Sigmoid colon (tissue), 7 donors: ENCODE measurements at regions of chr15 and their contacts with region 1.

Region 1: GRCh38 chr15:90994417-90995311 is at the start of gene PRC1:
- DNase-seq: peak; percentile 99
- H3K4me3 ChIP-seq: peak within 1 kb of the TSS; percentile 59 to 96 (median 80)
- H3K27ac ChIP-seq: peak within 1 kb of the TSS; percentile 82 to 92 (median 87)
- H3K4me1 ChIP-seq: peaks cover 0 to 11% (median 7%) of the 10 kb centered on the region in 4 donors
- H3K27me3 ChIP-seq: no peaks in the 10 kb centered on the region
- CTCF ChIP-seq: no peak
- EP300 ChIP-seq: no peak
- POLR2A ChIP-seq: peak in 1 of 2 donors; percentile 39
- total RNA-seq, gene PRC1: 1.8 to 13.8 (median 6.4) TPM

Region 2: DNA sequence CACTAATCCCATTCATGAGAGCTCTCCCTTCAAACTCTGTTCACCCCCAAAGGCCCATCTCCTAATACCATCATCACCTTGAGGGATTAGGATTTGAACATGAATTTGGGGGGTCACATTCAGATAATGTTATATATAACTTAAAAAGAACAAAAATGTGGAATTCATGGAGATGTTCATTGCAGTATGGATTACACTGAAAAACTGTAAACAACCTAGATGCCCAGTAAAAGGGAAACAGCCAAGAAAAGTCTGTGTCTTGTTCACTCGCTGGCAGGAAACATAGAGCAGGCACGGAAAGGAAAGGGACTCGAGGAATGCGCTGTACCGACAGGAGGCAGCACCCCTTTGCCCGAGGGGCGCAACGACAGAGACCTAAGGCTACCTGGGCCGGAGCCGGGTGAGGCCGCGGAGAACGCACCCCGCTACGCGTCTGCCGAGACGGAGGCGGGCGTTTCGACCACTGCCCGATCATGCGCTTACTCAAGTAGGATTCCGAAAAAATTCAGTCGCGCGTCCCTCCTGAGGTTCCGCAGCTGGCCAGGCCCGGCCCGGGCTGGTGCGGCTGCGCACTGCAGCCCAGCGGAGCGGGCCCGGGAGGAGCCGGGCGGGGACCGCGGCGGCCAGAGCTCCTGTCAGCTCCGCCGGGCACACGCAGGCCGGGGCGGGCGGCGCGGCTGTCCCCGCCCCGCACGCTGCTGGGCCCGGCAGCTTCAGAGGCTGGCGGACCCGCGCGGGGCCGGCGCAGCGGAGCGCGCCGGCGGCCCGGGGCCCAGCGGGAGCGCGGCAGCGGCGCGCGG is 92.4 kb before region 1 on chr15:
- intact Hi-C with region 1: loop called (anchors 2 kb)
- DNase-seq: peak; percentile 88
- H3K4me3 ChIP-seq: peak overlapping the region; percentile 48 to 81 (median 74)
- H3K27ac ChIP-seq: peak overlapping the region; percentile 93 to 98 (median 96)
- H3K4me1 ChIP-seq: peaks cover 0 to 25% (median 21%) of the 10 kb centered on the region in 4 donors
- H3K27me3 ChIP-seq: no peaks in the 10 kb centered on the region
- CTCF ChIP-seq: peak; percentile 47 to 84 (median 76)
- EP300 ChIP-seq: no peak
- POLR2A ChIP-seq: no peak

Region 3: DNA sequence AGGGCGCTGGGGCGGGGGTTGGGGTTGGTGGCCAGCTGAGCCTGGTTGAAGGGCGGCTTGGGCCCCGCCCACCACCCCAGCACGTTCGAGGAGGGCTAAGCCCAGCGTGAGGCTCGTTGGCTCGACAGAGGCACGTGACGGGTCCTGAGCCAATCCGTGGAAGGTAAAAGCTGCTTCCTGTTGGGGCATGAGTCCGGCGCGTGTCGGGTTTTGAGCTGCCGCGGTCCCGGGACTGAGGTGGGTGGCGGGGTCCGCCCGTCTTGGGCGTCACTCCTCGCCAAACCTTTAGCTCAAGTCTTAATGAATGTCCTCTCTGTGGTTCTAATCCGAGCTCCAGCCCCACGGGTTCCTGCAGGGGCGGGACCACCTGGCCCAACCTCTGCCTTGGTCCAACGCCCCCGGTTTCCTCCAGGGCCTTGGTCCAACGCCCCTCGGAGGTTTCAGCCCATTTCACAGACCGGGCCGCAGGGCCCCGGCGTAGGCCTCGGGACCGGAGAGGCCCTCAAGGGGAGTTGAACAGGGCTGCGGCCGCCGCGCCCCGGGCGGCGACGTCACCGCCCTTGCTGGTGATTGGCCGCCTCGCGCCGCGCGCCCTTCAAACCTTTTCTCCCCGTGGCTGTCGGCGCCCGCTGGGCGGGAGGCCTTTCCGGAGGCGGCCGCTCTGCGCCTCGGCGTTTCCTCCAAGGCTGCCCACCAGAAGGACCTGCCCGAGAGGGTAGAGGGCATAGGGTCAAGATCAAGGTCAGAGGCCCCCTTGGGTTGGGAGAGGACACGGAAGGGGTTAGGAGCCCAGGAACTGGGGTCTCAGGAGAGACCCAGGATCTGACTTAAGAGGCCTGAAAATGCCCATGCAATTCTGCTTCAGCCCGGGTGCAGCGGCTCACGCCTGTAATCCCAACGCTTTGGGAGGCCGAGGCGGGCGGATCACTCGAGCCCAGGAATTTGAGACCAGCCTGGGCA is 39.7 kb before region 1 on chr15 and contains the start of gene RCCD1:
- intact Hi-C with region 1: loop called (anchors 2 kb)
- DNase-seq: peak; percentile 99
- H3K4me3 ChIP-seq: peak within 1 kb of the TSS; percentile 81 to 93 (median 88)
- H3K27ac ChIP-seq: peak within 1 kb of the TSS; percentile 95 to 99 (median 96)
- H3K4me1 ChIP-seq: peaks cover 0 to 48% (median 41%) of the 10 kb centered on the region in 4 donors
- H3K27me3 ChIP-seq: no peaks in the 10 kb centered on the region
- CTCF ChIP-seq: no peak
- EP300 ChIP-seq: no peak
- POLR2A ChIP-seq: peak; percentile 17 to 36
- total RNA-seq, gene RCCD1: 5.2 to 8.0 (median 6.7) TPM

Region 4: GRCh38 chr15:91022075-91022835 is 27.6 kb after region 1 on chr15 and contains the start of gene VPS33B:
- intact Hi-C with region 1: loop called (anchors 2 kb)
- DNase-seq: peak; percentile 91
- H3K4me3 ChIP-seq: peak within 1 kb of the TSS; percentile 73 to 95 (median 79)
- H3K27ac ChIP-seq: peak within 1 kb of the TSS; percentile 69 to 81 (median 75)
- H3K4me1 ChIP-seq: peaks cover 0 to 22% (median 14%) of the 10 kb centered on the region in 4 donors
- H3K27me3 ChIP-seq: no peaks in the 10 kb centered on the region
- CTCF ChIP-seq: no peak
- EP300 ChIP-seq: peak in 1 of 4 donors; percentile 21
- POLR2A ChIP-seq: no peak
- total RNA-seq, gene VPS33B: 6.6 to 9.3 (median 7.6) TPM